Activated CD4-positive, alpha-beta T cell treated with anti-CD3 and anti-CD28 coated beads, Interleukin-2, amount 10 ng/mL, durations not matched to agents 24 days and 14 days (primary cell): ENCODE measurements at regions of chr15 and their contacts with region 1.

Region 1: DNA sequence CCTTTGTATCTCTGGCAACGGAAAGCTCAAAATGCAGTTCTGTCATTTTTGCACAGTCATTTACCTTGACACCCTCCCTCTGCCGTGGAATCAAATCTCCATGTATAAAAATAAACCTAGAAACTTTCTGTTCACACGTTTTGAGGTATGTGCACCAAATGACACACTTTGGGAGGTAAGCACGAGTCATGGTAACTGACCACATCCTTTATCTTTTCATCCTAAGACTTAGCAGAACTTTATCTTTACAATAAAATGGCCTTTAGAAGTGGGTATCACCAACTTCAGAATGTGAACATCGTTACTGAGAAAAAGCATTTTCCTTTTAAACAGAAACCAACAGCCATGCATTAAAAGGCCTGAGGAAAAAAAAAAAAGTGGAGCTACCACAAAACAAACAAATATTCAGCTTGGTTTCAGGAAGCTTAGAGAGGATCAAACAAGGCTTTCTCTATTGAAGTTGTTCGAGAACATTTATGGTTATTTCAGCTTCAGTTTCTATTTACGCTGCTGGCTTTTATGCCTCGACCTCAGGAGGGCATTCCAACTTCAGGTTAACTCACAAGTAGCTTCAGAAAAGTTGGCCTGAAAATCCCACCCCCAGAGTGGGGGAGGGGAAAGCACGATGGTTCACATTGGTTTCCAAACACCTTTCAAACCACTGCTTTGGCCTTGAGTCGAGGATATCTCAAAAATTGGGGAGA is 171.1 kb upstream of the ICE2 start:
- DNase-seq: peak; percentile 86
- H3K4me3 Mint-ChIP-seq: peak overlapping the region; percentile 75
- H3K27ac Mint-ChIP-seq: peak overlapping the region; percentile 86
- H3K4me1 Mint-ChIP-seq: peaks cover 44% of the 10 kb centered on the region
- H3K27me3 Mint-ChIP-seq: no peaks in the 10 kb centered on the region

Region 2: GRCh38 chr15:60592371-60593169 is 57.4 kb before region 1 on chr15:
- intact Hi-C with region 1: loop called (anchors 2 kb)
- DNase-seq: peak; percentile 96
- H3K4me3 Mint-ChIP-seq: peak overlapping the region; percentile 87
- H3K27ac Mint-ChIP-seq: peak overlapping the region; percentile 80
- H3K4me1 Mint-ChIP-seq: peaks cover 51% of the 10 kb centered on the region
- H3K27me3 Mint-ChIP-seq: peaks cover 2% of the 10 kb centered on the region

Region 3: GRCh38 chr15:60774829-60775463 is 124.9 kb after region 1 on chr15:
- intact Hi-C with region 1: loop called (anchors 1 kb)
- DNase-seq: no peak
- H3K4me3 Mint-ChIP-seq: no peak overlapping the region
- H3K27ac Mint-ChIP-seq: peak overlapping the region; percentile 48
- H3K4me1 Mint-ChIP-seq: peaks cover 28% of the 10 kb centered on the region
- H3K27me3 Mint-ChIP-seq: no peaks in the 10 kb centered on the region

Region 4: DNA sequence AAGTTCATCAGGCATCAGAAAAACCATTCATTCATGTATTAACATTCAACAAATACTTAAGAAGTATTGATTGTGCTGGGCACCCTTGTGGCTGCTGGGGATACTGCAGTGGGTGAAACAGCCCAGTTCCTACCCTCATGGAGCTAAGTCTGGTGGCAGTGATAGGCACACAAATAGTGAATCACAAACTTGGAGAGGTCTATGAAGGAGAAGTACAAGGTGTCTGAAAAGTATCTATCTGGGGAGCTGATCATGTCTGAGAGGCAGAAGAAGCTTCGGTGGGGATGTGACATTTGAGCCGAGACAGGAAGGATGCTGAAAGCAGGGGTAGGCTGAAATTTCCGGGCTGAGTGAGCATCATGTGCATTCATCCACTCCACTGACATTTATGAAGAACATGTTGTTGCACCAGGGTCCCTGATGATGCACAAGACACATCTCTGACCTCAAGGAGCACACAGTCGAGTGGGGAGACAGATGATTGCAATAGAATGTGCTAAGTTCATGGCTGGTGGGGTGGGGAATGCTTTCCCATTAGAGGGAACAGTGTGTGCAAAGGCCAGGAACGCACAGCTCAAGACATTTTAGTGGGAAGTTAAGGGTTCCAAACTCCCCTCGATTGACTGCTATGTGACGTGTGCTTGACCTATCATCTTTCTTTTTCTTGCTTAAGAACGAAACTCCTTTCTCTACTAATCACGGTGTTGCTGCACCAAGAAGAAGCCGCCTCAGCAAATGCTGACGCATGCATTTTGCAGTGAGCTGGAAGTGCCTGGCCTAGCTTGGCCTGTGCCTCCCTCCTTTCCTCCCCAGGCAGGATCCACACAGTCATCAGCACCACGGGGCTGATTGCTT is 138.1 kb after region 1 on chr15:
- intact Hi-C with region 1: no loop called
- DNase-seq: peak; percentile 74
- H3K4me3 Mint-ChIP-seq: peak overlapping the region; percentile 1
- H3K27ac Mint-ChIP-seq: peak overlapping the region; percentile 8
- H3K4me1 Mint-ChIP-seq: peaks cover 21% of the 10 kb centered on the region
- H3K27me3 Mint-ChIP-seq: no peaks in the 10 kb centered on the region

Region 5: DNA sequence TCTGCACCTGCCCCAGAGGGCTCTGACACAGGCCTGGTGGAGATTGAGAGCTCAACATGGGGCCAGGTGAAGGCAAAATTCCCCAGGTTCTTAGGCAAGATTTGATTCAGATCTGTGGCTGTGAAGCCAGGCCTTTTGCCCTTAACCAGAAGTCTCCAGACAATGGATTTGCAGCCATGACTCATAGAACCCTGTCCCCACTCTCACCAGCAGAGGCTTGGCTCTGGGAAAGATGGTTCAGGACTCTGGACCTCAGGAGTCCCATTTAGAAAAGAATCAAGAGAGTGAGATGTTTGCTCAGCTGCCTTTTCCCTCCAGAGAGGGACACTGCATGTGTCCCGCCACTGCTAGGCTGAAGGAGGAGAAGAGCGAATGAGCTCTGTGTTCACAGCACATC is 190.3 kb after region 1 on chr15:
- intact Hi-C with region 1: loop called (anchors 5 kb)
- DNase-seq: no peak
- H3K4me3 Mint-ChIP-seq: peak overlapping the region; percentile 63
- H3K27ac Mint-ChIP-seq: peak overlapping the region; percentile 35
- H3K4me1 Mint-ChIP-seq: peaks cover 67% of the 10 kb centered on the region
- H3K27me3 Mint-ChIP-seq: peaks cover 16% of the 10 kb centered on the region